Left ventricle myocardium inferior (tissue), 1 donor: ENCODE measurements at regions of chr5 and their contacts with region 1.

Region 1: DNA sequence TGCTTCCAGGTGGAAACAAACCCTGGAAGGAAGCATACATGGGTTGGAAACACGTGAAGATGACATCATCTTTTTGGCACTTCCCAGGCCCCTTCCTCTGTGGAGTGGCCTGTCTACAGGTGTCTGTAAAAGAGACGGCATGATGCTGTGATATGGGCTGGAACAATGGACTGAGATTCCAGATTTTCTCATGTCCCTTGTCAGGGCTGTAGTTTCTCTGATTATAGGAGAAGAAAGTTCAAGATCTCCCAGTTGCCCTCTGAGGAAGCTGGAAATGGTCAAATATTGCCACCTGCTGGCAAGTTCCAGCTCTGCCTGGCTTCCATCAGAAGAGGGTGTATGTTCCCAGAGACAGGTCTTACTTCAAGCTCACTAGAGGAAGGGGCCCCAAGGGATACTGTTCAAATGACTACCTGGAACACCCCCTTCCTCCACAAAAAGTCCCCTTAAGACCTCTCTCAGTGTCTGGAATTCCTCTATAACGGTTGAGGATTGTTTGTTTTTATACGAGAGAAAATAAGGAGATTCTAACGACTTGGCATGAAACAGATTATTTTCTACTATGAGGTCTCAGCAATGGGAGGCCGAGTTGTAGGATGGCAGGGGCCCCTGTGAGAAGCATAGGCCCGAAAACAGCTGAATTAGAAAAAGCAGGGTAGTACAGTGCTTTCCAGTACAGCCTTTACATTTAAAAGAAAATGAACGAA is 7.3 kb upstream of the ANXA6 start:
- DNase-seq: peak; percentile 63
- H3K4me3 ChIP-seq: no peak overlapping the region
- H3K27ac ChIP-seq: no peak overlapping the region
- H3K4me1 ChIP-seq: peaks cover 31% of the 10 kb centered on the region
- H3K27me3 ChIP-seq: no peaks in the 10 kb centered on the region
- CTCF ChIP-seq: peak; percentile 94

Region 2: DNA sequence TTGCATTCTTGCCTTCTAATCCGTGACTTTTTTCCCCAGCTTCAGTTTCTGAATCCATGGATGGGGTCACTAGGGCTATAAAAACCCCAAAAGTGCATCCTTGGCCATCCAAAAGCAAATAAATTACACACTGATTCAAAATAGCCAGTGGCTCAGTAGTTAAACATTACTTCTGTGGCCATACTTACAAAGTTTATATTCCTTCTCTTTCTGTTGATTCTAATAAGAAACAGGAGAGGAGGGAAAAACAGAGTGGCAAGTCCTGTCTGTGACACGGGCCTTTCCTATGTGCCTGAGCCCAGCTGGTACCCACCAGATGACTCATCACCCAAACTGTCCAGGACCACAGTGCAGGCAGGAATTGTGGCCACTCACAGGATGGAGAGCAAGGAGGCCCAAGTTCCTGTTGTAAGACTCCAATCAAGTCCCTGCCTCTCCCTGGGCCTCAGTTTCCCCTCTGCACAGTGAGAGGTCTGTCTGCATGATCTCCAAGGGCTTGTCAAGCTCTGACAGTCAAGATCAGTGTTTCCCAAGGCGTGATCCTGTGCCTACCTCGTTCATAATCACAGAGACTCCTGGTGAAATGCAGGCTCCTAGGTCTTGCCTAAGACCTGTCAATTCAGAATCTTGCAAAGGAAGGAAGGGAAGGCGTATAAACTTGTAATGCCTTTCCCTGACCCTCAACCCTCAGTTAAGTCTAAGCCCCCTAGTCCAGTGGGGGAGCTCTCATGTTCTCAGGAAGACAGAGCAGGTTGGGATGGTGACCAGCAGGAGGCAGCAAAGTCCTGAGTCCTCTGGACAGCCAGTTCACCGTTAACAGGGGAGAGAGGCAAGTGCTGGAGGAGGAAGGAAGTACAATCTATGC is 113.5 kb before region 1 on chr5:
- intact Hi-C with region 1: loop called (anchors 5 kb)
- DNase-seq: peak; percentile 81
- H3K4me3 ChIP-seq: no peak overlapping the region
- H3K27ac ChIP-seq: peak overlapping the region; percentile 61
- H3K4me1 ChIP-seq: peaks cover 37% of the 10 kb centered on the region
- H3K27me3 ChIP-seq: no peaks in the 10 kb centered on the region
- CTCF ChIP-seq: peak; percentile 89

Region 3: DNA sequence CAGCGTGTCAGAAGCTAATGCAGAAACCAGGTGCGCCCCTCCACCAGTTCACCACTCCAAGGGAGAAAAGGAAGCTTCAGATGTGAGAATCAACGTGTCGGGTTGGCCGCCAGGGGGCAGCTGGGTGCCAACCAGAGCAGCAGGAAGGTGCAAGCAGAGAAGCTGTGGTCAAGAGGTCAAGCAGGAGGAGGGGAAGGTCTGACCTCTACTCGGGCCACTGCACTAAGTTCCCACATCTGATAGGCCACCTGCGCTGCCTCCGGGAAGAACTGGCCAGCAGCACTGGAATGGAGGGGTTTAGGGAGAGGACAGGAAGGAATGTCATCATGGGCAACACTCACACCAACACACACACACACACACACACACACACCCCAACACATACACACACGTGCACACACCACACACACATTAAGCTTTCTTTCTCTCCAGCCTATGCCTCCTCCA is 38.6 kb before region 1 on chr5:
- intact Hi-C with region 1: loop called (anchors 5 kb)
- DNase-seq: peak; percentile 72
- H3K4me3 ChIP-seq: no peak overlapping the region
- H3K27ac ChIP-seq: peak overlapping the region; percentile 19
- H3K4me1 ChIP-seq: peaks cover 46% of the 10 kb centered on the region
- H3K27me3 ChIP-seq: no peaks in the 10 kb centered on the region
- CTCF ChIP-seq: peak; percentile 82

Region 4: GRCh38 chr5:151239237-151239861 is 74.5 kb after region 1 on chr5:
- intact Hi-C with region 1: loop called (anchors 5 kb)
- DNase-seq: peak; percentile 82
- H3K4me3 ChIP-seq: peak overlapping the region; percentile 46
- H3K27ac ChIP-seq: peak overlapping the region; percentile 85
- H3K4me1 ChIP-seq: peaks cover 38% of the 10 kb centered on the region
- H3K27me3 ChIP-seq: no peaks in the 10 kb centered on the region
- CTCF ChIP-seq: peak; percentile 97